Activated CD4-positive, alpha-beta T cell treated with anti-CD3 and anti-CD28 coated beads for 36 hours (primary cell): ENCODE measurements at regions of chr1 and their contacts with region 1.

Region 1: DNA sequence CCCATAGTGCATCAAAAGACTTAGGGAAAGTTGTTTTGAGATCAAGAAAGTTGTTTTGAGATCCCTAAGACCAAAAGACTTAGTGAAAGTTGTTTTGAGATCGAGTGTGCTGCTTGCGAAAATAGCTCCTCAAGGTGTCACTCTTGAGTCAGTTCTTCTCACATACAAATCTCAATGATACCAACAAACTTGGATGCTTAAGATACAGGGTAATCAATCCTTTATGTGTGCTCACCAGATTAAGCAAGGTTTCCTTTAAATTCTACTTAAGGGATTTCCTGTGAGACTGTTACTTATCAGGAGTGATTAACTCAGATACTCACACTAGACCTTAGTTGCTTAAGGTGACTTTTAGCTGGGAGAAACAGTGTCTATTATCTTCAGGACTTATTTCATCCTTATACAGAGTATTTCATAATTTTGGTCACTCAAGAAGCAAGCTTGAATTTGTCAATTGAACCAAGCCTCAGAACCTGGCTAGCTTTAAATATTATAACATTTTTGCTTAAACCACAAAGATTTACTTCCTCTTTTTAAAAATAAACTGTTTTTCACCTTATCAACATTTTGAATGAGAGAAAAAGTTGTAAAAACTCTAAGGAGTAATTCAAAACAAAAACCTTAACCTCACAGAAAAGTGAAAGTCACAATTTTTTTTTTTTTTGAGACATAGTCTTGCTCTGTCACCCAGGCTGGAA is 8.0 kb upstream of the RLF start:
- DNase-seq: peak; percentile 40
- ATAC-seq: peak; percentile 72
- H3K4me3 Mint-ChIP-seq: no peak overlapping the region
- H3K27ac Mint-ChIP-seq: peak overlapping the region; percentile 48
- H3K4me1 Mint-ChIP-seq: peaks cover 7% of the 10 kb centered on the region
- H3K27me3 Mint-ChIP-seq: peaks cover 3% of the 10 kb centered on the region

Region 2: DNA sequence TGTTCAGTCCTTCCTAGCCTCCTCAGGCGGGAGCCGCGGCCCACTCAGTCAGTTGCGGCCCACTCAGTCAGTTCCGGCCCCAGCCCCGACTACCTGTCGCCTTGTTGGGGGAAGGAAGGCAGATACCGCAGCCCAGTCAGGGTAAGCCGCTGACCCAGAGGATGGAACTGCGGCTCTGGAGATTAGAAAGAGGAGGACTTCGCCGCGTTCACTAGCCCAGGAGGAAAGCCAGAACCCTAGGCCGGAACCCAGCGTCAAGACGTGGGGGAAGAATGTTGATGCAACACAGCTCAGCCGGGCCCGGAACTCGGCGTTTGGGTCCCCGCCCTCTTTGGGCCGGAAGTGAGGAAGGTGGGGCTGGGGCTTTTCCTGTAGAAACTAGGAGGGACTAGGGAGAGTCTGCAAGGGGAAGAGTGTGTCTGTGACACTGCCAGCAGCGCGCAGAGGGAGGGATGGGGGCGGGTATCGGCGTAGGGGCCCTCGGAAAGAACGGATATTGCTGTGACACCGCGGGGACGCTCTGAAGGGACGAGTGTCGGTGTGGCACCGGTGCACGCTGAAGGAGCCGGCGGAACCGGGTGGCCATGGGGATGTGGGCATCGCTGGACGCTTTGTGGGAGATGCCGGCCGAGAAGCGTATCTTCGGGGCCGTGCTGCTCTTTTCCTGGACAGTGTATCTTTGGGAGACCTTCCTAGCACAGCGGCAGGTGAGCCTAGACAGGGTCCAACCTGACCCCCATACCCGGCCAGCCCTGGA is 104.6 kb after region 1 on chr1 and contains the start of gene ZMPSTE24:
- CTCF ChIA-PET with region 1: interaction called, 10 read pairs
- POLR2A ChIA-PET with region 1: no interaction called
- intact Hi-C with region 1: no loop called
- DNase-seq: peak; percentile 98
- ATAC-seq: peak; percentile 97
- H3K4me3 Mint-ChIP-seq: peak within 1 kb of the TSS; percentile 99
- H3K27ac Mint-ChIP-seq: peak within 1 kb of the TSS; percentile 100
- H3K4me1 Mint-ChIP-seq: peaks cover 47% of the 10 kb centered on the region
- H3K27me3 Mint-ChIP-seq: no peaks in the 10 kb centered on the region
- total RNA-seq, gene ZMPSTE24: 20.7 to 23.0 TPM

Region 3: GRCh38 chr1:40291293-40291692 is 138.1 kb after region 1 on chr1:
- CTCF ChIA-PET with region 1: interaction called, 15 read pairs
- POLR2A ChIA-PET with region 1: no interaction called
- intact Hi-C with region 1: no loop called
- DNase-seq: no peak
- ATAC-seq: no peak
- H3K4me3 Mint-ChIP-seq: no peak overlapping the region
- H3K27ac Mint-ChIP-seq: peak overlapping the region; percentile 35
- H3K4me1 Mint-ChIP-seq: no peaks in the 10 kb centered on the region
- H3K27me3 Mint-ChIP-seq: no peaks in the 10 kb centered on the region

Region 4: DNA sequence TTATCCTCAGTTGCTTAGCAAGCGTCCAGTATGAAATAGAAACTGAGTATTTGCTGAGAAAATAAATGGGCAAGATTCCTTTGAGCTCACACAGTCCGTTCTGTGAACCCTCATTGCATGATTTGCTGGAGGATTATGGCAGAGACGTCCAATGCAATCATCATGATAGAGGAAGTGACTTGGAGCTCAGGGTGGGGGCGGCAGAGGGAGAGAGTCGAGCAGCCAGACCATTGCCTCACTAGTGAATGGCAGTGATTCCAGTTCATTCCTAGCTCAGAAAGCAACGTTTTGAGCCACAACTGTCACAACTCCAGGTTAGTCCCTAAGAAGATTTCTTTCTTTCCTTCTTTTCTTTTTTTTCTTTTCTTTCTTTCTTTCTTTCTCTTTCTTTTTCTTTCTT is 191.4 kb after region 1 on chr1:
- CTCF ChIA-PET with region 1: interaction called, 198 read pairs
- POLR2A ChIA-PET with region 1: interaction called, 3 read pairs
- intact Hi-C with region 1: no loop called
- DNase-seq: peak; percentile 60
- ATAC-seq: peak; percentile 44
- H3K4me3 Mint-ChIP-seq: peak overlapping the region; percentile 48
- H3K27ac Mint-ChIP-seq: peak overlapping the region; percentile 79
- H3K4me1 Mint-ChIP-seq: peaks cover 49% of the 10 kb centered on the region
- H3K27me3 Mint-ChIP-seq: no peaks in the 10 kb centered on the region

Region 5: DNA sequence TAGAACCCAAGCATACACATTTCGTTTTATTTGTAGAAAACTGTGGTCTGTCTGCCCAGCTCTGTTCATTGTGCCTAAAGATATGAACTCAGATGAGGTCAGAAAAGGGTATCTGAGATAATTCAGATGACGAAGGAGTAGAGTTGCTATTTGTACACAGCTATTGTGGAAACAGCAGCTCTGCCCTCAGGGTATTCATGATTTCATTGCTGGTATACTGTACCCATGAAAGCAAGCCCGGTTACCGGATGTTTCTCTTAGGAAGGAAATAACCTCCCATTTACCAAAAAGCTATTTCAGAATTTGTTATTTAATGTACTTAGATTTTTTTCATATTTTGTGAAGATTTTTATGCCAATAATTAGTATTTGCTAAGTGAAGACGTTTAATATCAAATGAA is 258.1 kb after region 1 on chr1:
- CTCF ChIA-PET with region 1: interaction called, 10 read pairs
- POLR2A ChIA-PET with region 1: no interaction called
- intact Hi-C with region 1: no loop called
- DNase-seq: no peak
- ATAC-seq: no peak
- H3K4me3 Mint-ChIP-seq: no peak overlapping the region
- H3K27ac Mint-ChIP-seq: no peak overlapping the region
- H3K4me1 Mint-ChIP-seq: peaks cover 21% of the 10 kb centered on the region
- H3K27me3 Mint-ChIP-seq: no peaks in the 10 kb centered on the region